Activated T-helper 1 cell treated with anti-CD3 and anti-CD28 coated beads, Interleukin-12 subunit alpha, Interleukin-12 subunit beta, Interleukin-2, Interleukin-4 antibody, amounts not matched to agents 30 ng/mL and 10 ng/mL and 1 ng/mL, durations not matched to agents 14 hours and 24 hours and 36 hours (primary cell): ENCODE measurements at regions of chr3 and their contacts with region 1.

Region 1: DNA sequence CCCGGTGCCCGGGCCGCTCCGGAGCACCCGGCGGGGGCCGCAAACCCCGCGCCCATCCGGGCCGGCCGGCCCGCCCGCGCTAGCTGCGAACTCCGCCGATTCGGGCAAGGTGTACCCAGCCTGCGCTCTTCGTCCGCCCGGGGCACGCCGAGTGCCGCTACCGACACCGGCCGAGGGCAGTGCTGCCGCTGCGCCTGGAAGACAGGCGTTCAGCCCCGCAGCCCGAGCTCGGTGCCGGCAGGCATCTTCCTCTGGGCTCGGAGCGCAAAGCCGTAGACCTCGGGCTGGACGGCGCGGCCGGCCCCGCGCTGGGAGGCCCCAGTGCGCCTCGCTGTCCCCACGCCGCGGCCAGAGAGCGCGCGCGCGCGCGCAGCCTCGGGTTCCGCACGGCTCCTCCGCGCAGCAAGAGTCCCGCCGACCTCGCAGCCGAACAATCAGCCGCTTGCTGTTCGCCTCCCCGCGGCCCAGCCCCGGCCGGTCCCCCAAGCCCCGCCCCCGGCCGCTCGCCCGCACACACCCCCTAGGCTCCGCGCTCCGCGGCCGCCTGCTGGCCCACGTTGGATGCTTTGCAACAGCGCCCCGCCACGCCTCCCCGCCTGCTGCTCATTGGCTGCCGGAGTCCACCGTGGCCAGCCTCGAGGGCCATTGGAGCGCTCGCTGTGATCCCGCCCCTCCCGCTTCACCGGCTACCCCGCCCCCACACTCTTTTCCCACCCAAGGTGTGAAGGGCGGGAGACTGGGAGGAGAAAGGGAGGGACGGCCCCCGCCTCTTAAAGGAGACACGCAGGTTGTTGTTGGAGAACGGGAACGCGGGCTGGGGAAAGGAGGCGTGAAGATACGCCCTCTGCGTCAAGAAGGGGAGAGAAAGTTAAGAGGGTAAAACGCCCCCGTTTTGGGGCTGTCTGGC is at the start of gene LRIG1:
- DNase-seq: peak; percentile 99
- H3K4me3 Mint-ChIP-seq: peak within 1 kb of the TSS; percentile 99
- H3K27ac Mint-ChIP-seq: peak within 1 kb of the TSS; percentile 89
- H3K4me1 Mint-ChIP-seq: peaks cover 71% of the 10 kb centered on the region
- H3K27me3 Mint-ChIP-seq: peaks cover 18% of the 10 kb centered on the region
- total RNA-seq, gene LRIG1: 57.4 and 59.5 TPM in 2 replicates

Region 2: DNA sequence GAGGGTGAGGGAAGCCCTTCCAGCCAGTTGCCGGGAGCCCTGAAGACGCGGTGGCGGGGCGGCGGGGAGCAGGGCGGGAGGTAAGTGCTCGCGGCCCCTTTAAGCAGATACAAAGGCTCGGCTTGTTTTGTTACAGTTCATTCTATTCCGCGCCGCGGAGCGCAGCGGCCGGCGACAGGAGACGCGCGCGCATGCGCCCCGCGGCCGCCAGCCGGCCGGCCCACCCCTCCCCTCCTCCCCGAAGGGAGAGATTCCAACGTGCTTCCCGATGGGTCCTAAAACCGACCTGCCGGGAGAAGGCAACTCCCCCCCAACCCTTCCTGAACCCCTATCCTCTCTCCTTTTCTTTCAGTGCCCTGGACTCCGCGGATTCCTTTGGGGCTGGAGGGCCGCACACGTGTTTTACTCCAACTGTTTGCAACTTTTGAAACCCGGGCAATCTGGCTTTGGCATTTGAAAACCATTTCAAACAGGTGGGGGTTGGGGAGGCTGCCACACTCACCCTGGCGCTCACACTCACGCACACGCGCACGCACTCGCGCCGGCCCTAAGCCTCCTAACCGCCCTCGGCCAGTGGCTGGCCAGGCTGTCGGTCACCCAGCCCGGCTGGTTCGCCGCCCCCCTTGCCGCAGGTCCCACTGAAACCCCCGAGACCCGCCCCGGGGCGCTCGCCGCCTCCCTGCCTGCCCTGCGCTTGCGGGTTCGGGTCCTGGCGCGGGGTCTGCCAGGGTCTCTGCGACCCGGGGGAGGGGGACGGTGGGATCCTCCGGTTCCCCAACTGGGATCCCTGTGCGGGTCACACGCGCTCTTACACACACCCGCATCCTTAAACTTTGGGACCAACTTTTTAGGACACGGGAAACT is 461.9 kb before region 1 on chr3 and contains the start of gene MAGI1:
- intact Hi-C with region 1: loop called (anchors 10 kb)
- DNase-seq: peak; percentile 12
- H3K4me3 Mint-ChIP-seq: peak within 1 kb of the TSS; percentile 94
- H3K27ac Mint-ChIP-seq: peak within 1 kb of the TSS; percentile 75
- H3K4me1 Mint-ChIP-seq: peaks cover 8% of the 10 kb centered on the region
- H3K27me3 Mint-ChIP-seq: peaks cover 62% of the 10 kb centered on the region
- total RNA-seq, gene MAGI1: 0.69 and 0.75 TPM in 2 replicates

Region 3: GRCh38 chr3:66121318-66121717 is 379.5 kb before region 1 on chr3:
- intact Hi-C with region 1: no loop called
- DNase-seq: no peak
- H3K4me3 Mint-ChIP-seq: no peak overlapping the region
- H3K27ac Mint-ChIP-seq: no peak overlapping the region
- H3K4me1 Mint-ChIP-seq: no peaks in the 10 kb centered on the region
- H3K27me3 Mint-ChIP-seq: peaks cover 5% of the 10 kb centered on the region

Region 4: GRCh38 chr3:66276705-66277274 is 224.0 kb before region 1 on chr3:
- intact Hi-C with region 1: loop called (anchors 5 kb)
- DNase-seq: peak; percentile 41
- H3K4me3 Mint-ChIP-seq: no peak overlapping the region
- H3K27ac Mint-ChIP-seq: no peak overlapping the region
- H3K4me1 Mint-ChIP-seq: peaks cover 21% of the 10 kb centered on the region
- H3K27me3 Mint-ChIP-seq: no peaks in the 10 kb centered on the region

Region 5: GRCh38 chr3:66407611-66408218 is 93.1 kb before region 1 on chr3:
- intact Hi-C with region 1: loop called (anchors 1 kb)
- DNase-seq: peak; percentile 63
- H3K4me3 Mint-ChIP-seq: no peak overlapping the region
- H3K27ac Mint-ChIP-seq: no peak overlapping the region
- H3K4me1 Mint-ChIP-seq: peaks cover 16% of the 10 kb centered on the region
- H3K27me3 Mint-ChIP-seq: no peaks in the 10 kb centered on the region

Region 6: GRCh38 chr3:66428733-66429132 is 72.1 kb before region 1 on chr3:
- intact Hi-C with region 1: no loop called
- DNase-seq: no peak
- H3K4me3 Mint-ChIP-seq: no peak overlapping the region
- H3K27ac Mint-ChIP-seq: no peak overlapping the region
- H3K4me1 Mint-ChIP-seq: peaks cover 33% of the 10 kb centered on the region
- H3K27me3 Mint-ChIP-seq: no peaks in the 10 kb centered on the region

Region 7: DNA sequence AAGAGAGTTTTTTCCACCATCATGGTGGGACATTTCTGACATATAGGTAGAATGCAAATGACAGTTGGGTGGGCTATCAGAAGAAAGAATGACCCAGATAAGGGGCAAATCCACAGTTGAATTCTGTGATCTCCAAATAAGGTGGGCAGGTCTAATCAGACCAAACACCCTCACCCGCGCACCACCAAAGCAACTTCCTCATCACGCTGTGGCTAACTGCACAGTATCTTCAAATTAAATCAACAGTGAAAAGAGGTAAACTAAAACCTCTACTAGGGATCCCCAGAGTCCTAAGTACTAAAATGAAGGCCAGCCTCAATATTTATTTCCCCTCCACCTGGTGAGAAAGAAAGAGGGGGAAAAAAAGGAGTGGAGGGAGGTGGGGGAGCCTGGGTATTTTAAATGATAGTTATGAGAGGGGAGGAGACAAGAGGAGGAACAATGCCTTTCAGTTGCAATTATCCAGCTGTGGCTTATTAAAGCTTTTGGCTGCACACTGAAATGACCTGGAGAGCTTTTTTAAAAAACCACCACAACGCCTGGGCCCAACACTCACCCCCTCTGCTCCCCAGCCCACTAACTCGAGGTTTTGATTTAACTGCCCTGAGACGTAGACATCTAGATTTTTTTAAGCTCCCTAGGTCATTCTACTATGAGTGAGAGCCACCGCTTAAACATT is 61.0 kb before region 1 on chr3:
- intact Hi-C with region 1: no loop called
- DNase-seq: no peak
- H3K4me3 Mint-ChIP-seq: no peak overlapping the region
- H3K27ac Mint-ChIP-seq: no peak overlapping the region
- H3K4me1 Mint-ChIP-seq: peaks cover 40% of the 10 kb centered on the region
- H3K27me3 Mint-ChIP-seq: no peaks in the 10 kb centered on the region

Region 8: DNA sequence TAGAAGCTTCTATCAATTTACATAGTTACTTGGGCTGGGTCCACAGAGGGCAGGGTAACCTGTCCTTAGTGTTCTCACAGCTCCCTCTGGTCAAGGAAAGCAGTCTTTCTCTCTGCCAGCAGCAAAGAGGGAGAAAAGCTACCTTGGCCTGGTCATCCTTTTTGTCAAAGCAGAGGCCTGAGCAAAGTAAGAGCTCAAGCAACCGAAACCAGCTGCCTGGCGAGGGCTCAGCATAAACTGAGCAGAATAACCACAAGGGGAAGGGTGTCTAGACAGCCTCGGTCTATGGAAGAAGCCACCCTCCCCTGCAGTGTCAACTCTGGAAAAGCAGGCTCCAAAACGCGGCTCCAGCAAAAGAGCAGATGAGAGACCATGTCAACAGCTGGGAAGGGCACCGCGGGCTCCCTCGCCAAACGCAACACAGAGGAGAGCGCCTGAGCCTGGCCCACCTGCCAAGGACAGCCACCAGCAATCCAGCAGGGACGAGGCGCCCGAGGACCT is 17.4 kb before region 1 on chr3:
- intact Hi-C with region 1: loop called (anchors 1 kb)
- DNase-seq: no peak
- H3K4me3 Mint-ChIP-seq: peak overlapping the region; percentile 42
- H3K27ac Mint-ChIP-seq: peak overlapping the region; percentile 35
- H3K4me1 Mint-ChIP-seq: peaks cover 52% of the 10 kb centered on the region
- H3K27me3 Mint-ChIP-seq: no peaks in the 10 kb centered on the region

Region 9: DNA sequence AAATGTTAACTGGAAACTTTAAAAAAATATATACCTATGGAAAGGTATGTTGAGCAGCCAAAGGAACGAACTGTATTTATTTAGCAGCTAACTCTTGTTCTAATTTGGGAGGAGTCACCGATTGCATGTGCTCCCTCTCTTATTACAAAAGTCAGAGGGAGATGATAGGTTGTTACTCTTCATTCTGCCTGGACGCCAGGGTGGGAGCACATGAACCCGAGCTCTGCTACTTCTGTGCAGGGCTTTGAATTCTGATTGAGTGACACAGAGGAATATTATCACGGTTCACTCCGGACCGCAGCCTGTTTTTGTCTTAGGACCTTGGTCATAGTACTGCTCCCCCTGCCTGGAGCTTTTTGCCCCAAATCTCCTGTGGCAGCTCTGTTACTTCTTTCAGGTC is 36.9 kb after region 1 on chr3:
- intact Hi-C with region 1: no loop called
- DNase-seq: no peak
- H3K4me3 Mint-ChIP-seq: no peak overlapping the region
- H3K27ac Mint-ChIP-seq: no peak overlapping the region
- H3K4me1 Mint-ChIP-seq: no peaks in the 10 kb centered on the region
- H3K27me3 Mint-ChIP-seq: peaks cover 9% of the 10 kb centered on the region

Region 10: DNA sequence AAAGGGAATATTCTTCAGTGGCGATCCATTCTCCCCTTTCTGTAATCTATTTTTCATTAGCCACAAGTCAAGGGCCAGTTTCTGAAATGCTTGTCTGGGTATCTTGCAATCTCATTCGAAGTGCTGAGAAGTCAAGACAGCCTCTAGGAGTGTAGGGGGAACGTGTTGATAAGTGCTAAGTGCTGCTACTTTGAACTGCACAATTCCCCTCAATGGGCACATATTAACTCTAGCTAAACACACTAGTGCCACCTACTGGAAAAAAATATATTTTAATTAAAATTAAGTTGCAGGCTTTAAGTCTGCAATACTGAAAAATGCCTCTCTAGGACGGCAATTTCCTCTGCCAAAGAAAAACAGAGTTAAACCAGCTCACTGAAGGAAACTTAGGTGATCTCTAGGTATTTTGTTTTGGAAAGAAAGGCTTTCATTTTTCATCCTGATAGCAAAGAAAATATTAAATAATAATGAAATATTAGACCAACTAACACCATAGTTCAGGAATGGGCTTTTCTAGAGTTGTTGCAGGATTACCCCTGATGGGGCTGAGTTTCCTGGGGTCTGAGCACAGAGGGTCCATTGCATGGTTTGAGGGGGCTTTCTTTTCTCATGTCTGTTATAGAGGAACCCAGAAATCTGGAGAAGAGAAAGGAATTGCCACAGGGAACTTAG is 315.4 kb after region 1 on chr3:
- intact Hi-C with region 1: loop called (anchors 10 kb)
- DNase-seq: no peak
- H3K4me3 Mint-ChIP-seq: no peak overlapping the region
- H3K27ac Mint-ChIP-seq: no peak overlapping the region
- H3K4me1 Mint-ChIP-seq: no peaks in the 10 kb centered on the region
- H3K27me3 Mint-ChIP-seq: peaks cover 14% of the 10 kb centered on the region